Panc1 (cell line): ENCODE measurements at regions of chr12 and their contacts with region 1.

Region 1: GRCh38 chr12:13635709-13636108 is 345.7 kb downstream of the GRIN2B start:
- DNase-seq: no peak
- ATAC-seq: no peak
- H3K4me3 ChIP-seq: no peak overlapping the region
- H3K27ac ChIP-seq: no peak overlapping the region
- H3K4me1 ChIP-seq: no peaks in the 10 kb centered on the region
- H3K27me3 ChIP-seq: no peaks in the 10 kb centered on the region
- CTCF ChIP-seq: no peak

Region 2: DNA sequence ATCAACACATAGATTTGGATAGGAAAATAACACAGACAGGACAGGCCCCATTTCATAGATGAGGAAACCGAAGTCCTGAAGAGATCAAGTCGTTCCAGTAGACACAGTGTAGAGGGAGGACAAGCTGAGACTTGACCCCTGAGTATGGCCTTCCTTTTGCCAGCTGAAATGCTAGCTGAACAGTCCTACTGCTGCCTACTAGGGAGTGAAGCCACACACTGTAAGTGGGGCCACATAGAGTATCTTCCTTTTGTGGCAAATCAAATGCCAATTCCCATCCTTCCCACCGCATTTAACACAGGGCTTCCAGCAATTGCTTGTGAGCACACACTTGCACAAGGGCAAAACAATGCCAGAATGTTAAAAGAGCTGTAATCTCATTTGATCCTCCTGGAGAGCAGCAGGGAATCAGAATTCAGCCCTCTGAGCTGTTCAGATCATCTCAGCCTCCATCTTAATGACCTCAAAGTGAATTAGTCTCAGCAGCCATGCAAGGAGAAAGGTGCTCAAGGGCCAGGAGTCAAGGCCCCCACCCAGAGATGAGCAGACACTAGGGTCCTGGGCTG is 58.7 kb before region 1 on chr12:
- CTCF ChIA-PET with region 1: no interaction called
- POLR2A ChIA-PET with region 1: no interaction called
- in situ Hi-C with region 1: no loop called
- intact Hi-C with region 1: no loop called
- DNase-seq: no peak
- ATAC-seq: no peak
- H3K4me3 ChIP-seq: no peak overlapping the region
- H3K27ac ChIP-seq: no peak overlapping the region
- H3K4me1 ChIP-seq: no peaks in the 10 kb centered on the region
- H3K27me3 ChIP-seq: no peaks in the 10 kb centered on the region
- CTCF ChIP-seq: no peak

Region 3: DNA sequence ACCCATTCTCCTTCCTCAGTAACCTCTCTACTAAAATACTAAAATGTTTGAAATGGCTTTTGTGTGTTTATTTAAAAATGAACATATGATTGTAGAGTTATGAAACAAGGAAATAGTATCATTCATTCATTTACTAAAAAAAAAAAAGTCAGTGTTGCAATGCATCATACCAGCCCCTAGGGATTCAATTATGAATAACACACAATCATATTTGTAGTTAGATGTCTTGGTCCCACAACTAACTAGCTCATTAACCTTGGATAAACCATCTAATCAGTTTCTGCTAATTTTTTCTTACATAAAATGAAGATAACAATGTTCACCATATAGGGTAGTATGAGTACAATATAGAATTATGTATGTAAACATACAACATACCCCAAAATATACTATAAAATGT is 162.5 kb after region 1 on chr12:
- CTCF ChIA-PET with region 1: interaction called, 10 read pairs
- POLR2A ChIA-PET with region 1: no interaction called
- in situ Hi-C with region 1: no loop called
- intact Hi-C with region 1: no loop called
- DNase-seq: no peak
- ATAC-seq: no peak
- H3K4me3 ChIP-seq: no peak overlapping the region
- H3K27ac ChIP-seq: no peak overlapping the region
- H3K4me1 ChIP-seq: no peaks in the 10 kb centered on the region
- H3K27me3 ChIP-seq: no peaks in the 10 kb centered on the region
- CTCF ChIP-seq: no peak